Left cardiac atrium (tissue), 4 donors: ENCODE measurements at regions of chr10 and their contacts with region 1.

Region 1: DNA sequence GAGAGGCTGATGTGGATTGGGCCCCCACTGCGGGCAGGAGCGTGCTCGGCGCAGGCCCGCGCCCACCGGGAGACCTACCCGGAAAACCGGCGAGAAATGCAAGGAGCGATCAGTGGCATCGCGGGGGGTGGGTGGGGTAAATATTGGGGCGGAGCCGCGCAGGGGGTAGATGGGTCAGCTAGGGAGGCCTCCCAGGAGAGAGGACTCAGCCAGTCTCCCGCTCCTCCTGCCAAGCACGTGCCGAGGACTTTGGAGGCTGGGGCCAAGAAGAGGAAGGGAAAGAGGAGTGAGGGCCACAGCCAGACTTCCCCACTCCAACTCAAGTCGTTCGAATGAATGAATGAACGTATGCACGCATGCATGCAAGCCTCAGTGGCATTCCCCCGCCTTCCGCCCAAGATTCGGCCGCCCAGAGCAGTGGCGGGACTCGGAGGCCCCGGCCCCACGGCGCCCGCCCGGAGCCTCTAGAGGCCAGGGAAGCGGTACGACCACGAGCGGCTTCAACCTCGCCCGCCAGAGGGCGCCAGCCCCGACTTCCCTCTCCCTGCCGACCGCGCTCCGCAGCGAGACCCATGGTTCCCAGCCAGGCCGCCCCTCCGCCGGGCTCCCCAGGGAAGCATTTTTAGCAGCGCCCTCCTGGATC is 3.6 kb downstream of the NPM3 start:
- DNase-seq: peak; percentile 85
- ATAC-seq: peak; percentile 71 to 76

Region 2: DNA sequence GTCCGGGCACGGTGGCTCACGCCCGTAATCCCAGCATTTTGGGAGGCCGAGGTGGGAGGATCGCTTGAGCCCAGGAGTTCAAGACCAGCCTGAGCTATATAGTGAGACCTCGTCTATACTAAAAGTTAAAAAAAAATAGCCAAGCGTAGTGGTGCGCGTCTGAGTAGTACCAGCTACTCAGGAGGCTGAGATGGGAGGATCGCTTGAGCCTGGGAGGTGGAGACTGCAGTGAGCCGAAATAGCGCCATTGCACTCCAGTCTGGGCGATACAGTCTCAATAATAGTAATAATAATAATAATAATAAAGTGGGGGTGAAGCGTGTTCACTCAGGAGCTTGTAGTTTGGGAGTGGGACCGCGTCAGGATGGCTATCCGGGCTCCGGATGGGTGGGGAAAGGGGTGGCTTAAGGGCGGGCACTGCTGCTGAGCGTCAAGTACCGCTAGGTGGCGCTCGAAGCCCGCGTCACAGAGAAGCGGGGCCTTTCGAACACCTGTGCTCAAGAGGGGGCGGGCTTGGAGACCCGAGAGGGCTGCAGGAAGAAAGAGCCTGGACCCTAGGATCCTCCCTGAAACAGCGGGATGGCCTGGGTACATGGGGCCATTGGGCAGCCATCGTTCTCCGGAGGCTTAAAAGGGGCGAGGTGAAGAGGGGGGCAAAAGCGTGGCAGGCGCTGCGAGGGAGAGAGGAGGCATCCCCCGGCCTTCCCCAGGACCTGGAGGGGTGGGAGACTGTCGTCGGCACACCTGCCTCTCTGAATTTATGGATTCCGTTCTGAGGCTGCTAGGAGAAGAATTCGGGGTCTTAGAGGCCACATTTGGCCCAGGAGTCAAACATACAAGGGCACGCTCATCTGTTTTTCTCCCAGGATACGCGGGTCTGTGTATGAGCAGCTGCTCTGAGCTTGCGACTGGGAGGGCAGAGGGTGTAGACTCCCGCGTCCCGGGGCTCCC is 564.9 kb before region 1 on chr10:
- intact Hi-C with region 1: loop called (anchors 5 to 10 kb)
- DNase-seq: peak; percentile 72
- ATAC-seq: peak; percentile 78 to 86

Region 3: DNA sequence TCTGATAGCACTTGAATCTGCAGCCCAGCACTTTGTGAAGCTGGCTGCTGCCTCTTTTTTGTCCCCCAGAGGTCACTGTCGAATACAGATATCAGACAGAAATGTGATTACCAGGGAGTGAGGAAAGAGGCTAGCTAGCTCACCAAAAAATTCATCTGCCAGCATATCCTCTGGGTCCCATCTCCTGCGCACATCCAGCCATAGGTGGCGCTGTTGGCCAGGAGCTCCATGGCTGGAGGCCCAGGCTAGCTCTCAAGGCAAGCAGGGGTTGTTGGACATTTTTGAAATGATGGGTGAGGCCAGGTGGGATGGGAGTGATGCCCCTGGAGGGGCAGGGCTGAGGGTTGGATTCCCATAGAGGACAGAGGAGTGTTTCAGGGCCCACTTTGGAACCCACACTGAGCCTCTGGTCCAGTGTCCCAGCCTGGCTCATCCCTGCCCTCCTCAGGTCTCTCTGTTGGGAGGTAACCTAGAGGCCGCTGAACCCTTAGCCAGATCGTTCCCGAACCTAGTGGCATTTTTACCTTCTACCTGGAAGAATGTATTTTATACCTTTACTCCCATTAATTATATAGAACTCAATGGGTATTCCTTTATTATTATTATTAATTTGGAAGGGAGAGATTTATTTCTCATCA is 176.8 kb before region 1 on chr10:
- intact Hi-C with region 1: loop called (anchors 2 to 5 kb)
- DNase-seq: peak; percentile 77
- ATAC-seq: peak; percentile 84 to 90